Naive thymus-derived CD4-positive, alpha-beta T cell (primary cell): ENCODE measurements at regions of chr12 and their contacts with region 1.

Region 1: DNA sequence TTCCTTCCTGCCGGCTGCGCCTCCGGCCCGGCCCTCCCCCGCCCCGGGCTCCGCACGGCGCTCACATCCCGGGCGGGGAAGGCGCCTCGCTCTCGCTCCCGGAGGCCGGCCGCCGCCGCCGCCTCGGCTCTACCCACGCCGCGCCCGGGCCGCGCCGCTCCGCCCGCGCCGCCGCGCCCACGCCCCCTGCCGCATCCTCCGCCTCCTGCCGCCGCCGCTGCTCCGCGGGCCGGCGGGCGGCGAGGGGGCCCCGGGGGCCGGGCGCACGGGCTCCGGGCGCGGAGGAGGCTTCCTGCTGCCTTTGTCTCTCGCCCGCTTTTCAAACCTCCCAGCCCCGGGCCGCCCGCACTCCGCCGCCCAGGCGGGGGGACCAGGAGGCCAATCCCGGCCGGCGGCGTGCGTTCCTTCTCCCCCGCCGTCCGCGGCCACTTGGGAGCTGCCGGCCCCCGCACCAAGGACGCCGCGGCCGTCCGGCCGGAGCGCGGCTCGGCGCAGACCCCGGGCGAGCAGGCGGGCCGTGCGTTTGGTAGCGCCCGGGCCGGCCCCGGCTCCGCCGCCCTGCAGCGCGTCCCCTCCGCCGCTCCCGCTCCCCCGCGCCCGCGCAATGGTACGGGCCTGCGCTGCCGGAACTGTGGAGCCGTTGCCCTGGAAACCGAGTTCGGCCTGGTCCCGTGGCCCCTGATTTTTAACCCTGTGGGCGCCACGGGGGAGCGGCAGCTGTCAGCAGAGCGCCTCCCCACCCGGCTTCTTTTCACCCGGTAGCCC is at the start of gene FBXL14:
- DNase-seq: peak; percentile 87 to 93 (median 92)
- ATAC-seq: peak; percentile 85
- H3K4me3 ChIP-seq: peak within 1 kb of the TSS; percentile 91
- H3K4me3 Mint-ChIP-seq: peak within 1 kb of the TSS; percentile 89 to 98 (median 95)
- H3K27ac ChIP-seq: peak within 1 kb of the TSS; percentile 80
- H3K27ac Mint-ChIP-seq: peak within 1 kb of the TSS; percentile 94 to 97 (median 94)
- H3K4me1 ChIP-seq: peaks cover 19 to 23% of the 10 kb centered on the region in 2 donors
- H3K4me1 Mint-ChIP-seq: peaks cover 40 to 53% (median 44%) of the 10 kb centered on the region in 7 donors
- H3K27me3 ChIP-seq: no peaks in the 10 kb centered on the region
- H3K27me3 Mint-ChIP-seq: peaks cover 0 to 9% (median 0%) of the 10 kb centered on the region in 5 donors
- total RNA-seq, gene FBXL14: 25.6 to 43.8 (median 28.1) TPM

Region 2: DNA sequence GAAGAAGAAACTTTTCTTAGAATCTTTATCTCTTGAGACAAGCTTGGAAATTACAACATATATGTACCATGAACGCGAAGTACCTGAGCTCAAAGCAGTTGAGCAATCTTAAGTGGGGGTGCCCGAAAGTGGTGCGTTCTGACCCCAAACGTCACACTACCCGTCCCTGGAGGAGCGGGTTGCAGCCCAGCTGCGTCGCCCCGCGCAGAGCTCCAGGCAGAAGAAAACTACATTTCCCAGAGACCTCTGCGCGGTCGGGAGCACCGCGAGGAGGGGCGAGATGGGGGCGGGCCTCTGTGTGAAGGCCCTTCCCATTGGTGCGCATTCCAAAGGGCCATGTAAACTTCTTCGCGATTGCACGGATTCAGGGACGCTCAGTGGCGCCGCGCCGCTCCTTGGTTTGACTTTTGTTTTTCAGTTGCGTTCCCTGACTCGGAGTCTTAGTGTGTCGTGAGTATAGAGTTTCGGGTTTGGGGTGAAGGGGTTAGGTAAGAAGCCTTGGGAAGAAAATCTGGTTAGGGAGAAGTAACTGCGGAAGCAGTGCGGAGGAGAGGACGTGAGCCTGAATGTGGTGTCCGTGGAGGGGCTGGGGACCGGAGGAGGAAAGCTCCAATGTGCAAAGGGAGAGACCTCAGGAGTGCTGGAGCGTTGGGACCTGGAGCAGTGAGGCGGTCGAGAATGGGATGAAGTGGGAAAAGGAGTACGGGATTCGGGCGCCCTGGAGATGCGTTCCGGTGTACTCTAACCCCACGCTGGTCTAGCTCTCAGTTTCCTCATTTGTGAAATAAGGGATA is 1193.0 kb before region 1 on chr12 and contains the start of gene CCDC77:
- CTCF ChIA-PET with region 1: no interaction called
- POLR2A ChIA-PET with region 1: no interaction called
- intact Hi-C with region 1: loop called in 1 of 2 experiments (anchors 5 kb)
- DNase-seq: peak; percentile 91 to 97 (median 95)
- ATAC-seq: peak; percentile 100
- H3K4me3 ChIP-seq: peak within 1 kb of the TSS; percentile 94
- H3K4me3 Mint-ChIP-seq: no peak within 1 kb of the TSS
- H3K27ac ChIP-seq: peak within 1 kb of the TSS; percentile 71
- H3K27ac Mint-ChIP-seq: peak within 1 kb of the TSS in 1 of 9 donors; percentile 62
- H3K4me1 ChIP-seq: peaks cover 4 to 13% of the 10 kb centered on the region in 2 donors
- H3K4me1 Mint-ChIP-seq: peaks cover 0 to 9% (median 5%) of the 10 kb centered on the region in 7 donors
- H3K27me3 ChIP-seq: no peaks in the 10 kb centered on the region
- H3K27me3 Mint-ChIP-seq: no peaks in the 10 kb centered on the region
- total RNA-seq, gene CCDC77: 9.7 to 15.6 (median 12.7) TPM

Region 3: DNA sequence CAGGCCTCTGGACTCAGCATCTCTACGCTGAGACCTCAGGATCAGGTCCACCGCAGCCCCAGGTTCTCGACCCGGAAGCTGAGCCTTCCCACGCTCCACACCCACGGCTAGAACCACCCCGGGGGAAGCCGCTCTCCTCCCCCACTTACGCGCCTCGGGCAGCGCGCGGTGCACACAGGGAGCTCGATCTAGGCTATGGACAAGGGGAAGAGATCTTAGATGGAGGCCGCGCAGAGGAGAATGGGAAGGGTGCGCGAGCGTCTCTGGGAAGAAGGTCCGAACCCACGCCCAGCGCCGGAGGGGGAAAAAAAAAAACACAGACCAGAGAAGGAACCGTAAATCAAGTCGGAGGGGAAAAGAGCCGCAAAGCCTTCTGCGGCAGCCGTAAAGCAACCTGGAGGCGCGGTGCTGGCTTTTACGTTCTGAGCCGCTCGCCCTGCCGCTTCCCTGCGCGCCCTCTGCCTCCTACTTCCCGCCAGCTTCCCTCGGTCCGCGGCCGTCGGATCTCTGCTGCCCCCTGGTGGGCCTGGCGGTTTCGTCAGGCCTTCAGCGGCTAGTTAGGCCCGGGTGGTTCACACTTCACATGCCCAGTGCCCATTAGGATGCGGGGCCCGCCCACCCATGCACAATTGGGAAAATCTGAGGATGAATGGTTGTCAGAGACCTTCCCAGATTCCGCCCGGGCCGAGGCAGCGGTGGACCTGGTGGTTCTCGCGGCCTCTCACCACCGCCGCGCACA is 644.8 kb before region 1 on chr12 and contains the start of gene RAD52:
- CTCF ChIA-PET with region 1: no interaction called
- POLR2A ChIA-PET with region 1: no interaction called
- intact Hi-C with region 1: loop called (anchors 1 kb)
- DNase-seq: peak; percentile 94 to 99 (median 97)
- ATAC-seq: peak; percentile 96
- H3K4me3 ChIP-seq: peak within 1 kb of the TSS; percentile 83
- H3K4me3 Mint-ChIP-seq: peak within 1 kb of the TSS; percentile 90 to 98 (median 94)
- H3K27ac ChIP-seq: peak within 1 kb of the TSS; percentile 78
- H3K27ac Mint-ChIP-seq: peak within 1 kb of the TSS; percentile 88 to 98 (median 93)
- H3K4me1 ChIP-seq: peaks cover 0 to 3% of the 10 kb centered on the region in 2 donors
- H3K4me1 Mint-ChIP-seq: peaks cover 20 to 34% (median 30%) of the 10 kb centered on the region in 7 donors
- H3K27me3 ChIP-seq: no peaks in the 10 kb centered on the region
- H3K27me3 Mint-ChIP-seq: peaks cover 0 to 4% (median 0%) of the 10 kb centered on the region in 5 donors
- total RNA-seq, gene RAD52: 11.0 to 34.9 (median 18.3) TPM

Region 4: DNA sequence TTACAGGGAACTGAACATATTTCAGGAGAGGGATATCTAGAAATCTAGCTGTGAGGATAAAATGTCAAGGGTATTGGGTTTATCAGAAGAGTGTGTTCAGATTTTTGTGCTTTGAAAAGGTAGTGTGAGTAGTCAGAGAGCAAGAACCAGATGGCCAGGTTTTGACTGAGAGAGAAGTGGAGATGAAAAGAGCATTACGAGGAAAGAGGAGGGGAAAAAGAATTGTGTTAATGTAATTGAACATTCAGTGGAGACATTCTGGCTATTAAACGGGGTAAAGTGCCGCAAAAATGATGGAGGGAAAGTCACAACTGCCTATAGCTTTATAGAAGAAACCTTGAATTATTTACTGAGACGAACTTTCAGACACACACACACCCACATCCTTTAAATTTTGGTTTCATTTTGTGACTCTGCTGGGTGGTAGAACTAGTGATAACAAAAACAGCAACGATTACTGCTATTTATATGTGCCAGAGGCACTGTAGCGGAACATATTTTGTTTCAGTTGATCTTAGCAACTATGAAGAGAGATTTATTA is 389.8 kb before region 1 on chr12:
- CTCF ChIA-PET with region 1: no interaction called
- POLR2A ChIA-PET with region 1: interaction called, 3 read pairs
- intact Hi-C with region 1: loop called in 1 of 2 experiments (anchors 5 kb)
- DNase-seq: peak in 7 of 9 donors; percentile 14 to 69 (median 57)
- ATAC-seq: peak; percentile 86
- H3K4me3 ChIP-seq: peak overlapping the region; percentile 66
- H3K4me3 Mint-ChIP-seq: no peak overlapping the region
- H3K27ac ChIP-seq: peak overlapping the region; percentile 69
- H3K27ac Mint-ChIP-seq: no peak overlapping the region
- H3K4me1 ChIP-seq: peaks cover 4 to 15% of the 10 kb centered on the region in 2 donors
- H3K4me1 Mint-ChIP-seq: peaks cover 10 to 17% (median 10%) of the 10 kb centered on the region in 7 donors
- H3K27me3 ChIP-seq: no peaks in the 10 kb centered on the region
- H3K27me3 Mint-ChIP-seq: no peaks in the 10 kb centered on the region

Region 5: DNA sequence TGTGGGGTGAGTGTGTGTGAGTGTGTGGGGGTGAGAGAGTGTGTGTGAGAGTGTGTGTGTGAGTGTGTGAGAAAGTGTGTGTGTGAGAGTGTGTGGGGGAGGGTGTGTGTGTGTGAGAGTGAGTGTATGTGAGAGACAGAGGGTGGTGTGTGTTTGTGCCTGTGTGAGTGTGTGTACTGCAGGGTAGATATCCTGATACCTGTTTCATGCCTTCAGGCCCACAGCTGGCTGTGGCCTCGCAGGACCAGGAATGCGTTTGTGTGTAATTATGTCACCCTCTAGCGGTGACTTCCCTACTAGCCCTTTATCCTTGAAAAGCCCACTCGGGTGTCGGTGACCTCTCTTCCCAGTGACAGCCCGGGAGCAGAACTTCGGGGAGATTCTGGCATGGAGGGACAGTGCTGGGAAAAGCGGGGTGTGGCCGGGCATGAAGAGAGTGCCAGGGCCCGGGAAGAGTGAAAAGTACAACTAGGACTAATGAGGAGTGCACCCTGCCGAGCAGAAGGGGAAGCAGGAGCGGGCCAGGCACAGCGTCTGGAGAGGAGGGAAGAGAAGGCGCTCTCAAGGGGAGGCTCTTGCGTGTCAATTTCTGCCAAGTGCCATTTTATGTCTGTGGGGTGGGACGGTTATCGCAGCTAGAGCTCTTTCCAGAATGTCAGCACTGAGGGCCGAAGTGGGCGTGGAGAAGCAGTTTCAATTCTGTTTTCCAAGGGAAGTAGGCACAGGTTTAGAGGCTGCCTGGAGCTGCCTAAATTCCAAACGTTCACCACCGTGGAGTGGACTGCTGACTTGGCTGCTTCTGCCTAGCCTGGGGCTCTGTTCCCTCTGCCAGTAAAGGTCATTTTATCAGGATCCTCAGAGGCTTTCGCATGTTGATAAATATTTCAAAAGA is 10.9 kb after region 1 on chr12:
- CTCF ChIA-PET with region 1: interaction called, 14 read pairs
- POLR2A ChIA-PET with region 1: interaction called, 82 read pairs
- intact Hi-C with region 1: loop called (anchors 1 kb)
- DNase-seq: peak; percentile 32 to 76 (median 68)
- ATAC-seq: peak; percentile 83
- H3K4me3 ChIP-seq: peak overlapping the region; percentile 55
- H3K4me3 Mint-ChIP-seq: peak overlapping the region; percentile 80 to 94 (median 86)
- H3K27ac ChIP-seq: no peak overlapping the region
- H3K27ac Mint-ChIP-seq: peak overlapping the region in 8 of 9 donors; percentile 27 to 87 (median 56)
- H3K4me1 ChIP-seq: peaks cover 13 to 15% of the 10 kb centered on the region in 2 donors
- H3K4me1 Mint-ChIP-seq: peaks cover 20 to 44% (median 38%) of the 10 kb centered on the region in 7 donors
- H3K27me3 ChIP-seq: no peaks in the 10 kb centered on the region
- H3K27me3 Mint-ChIP-seq: peaks cover 0 to 8% (median 0%) of the 10 kb centered on the region in 5 donors

Region 6: DNA sequence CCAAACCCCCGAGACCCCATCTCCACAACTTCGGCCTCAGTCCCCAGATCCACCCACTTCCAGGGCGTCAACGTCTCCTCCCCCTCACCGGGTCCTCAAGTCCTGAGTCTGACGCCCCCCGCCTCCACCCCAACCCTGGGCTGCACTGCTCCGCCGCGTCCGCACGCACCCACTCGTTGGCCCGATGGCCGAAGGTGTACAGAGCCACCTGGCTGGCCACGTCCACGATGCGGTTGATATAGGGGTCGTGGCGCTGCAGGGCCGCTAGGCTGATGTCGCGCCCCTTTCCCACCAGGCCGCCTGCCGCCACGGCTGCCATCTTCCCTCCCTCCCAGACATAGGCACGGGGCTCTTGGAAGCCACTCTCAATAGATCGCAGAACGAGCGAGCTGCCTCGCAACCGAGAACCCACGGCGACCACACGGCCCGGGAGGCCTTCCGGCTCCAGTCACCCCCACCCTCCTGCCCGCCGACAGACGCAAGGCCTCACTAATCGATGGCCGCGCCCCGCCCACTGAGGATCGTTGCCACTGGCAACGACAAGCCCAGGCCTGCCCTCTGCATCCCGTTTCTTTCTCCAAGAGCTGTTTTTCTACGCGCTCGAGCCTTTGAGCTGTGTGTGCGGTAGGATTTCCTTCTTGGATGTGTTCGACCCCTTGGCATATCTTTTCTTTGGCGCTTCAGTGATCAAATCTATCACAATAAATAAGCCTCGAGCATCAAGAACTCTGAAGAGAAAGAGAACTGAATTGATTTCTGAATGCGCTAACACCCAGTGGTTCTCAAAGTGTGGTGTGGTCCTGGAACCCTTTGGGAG is 409.9 kb after region 1 on chr12 and contains the start of gene DCP1B:
- CTCF ChIA-PET with region 1: no interaction called
- POLR2A ChIA-PET with region 1: no interaction called
- intact Hi-C with region 1: loop called (anchors 1 to 2 kb)
- DNase-seq: peak; percentile 76 to 93 (median 90)
- ATAC-seq: peak; percentile 99
- H3K4me3 ChIP-seq: peak within 1 kb of the TSS; percentile 80
- H3K4me3 Mint-ChIP-seq: peak within 1 kb of the TSS; percentile 92 to 100 (median 97)
- H3K27ac ChIP-seq: peak within 1 kb of the TSS; percentile 80
- H3K27ac Mint-ChIP-seq: peak within 1 kb of the TSS; percentile 93 to 99 (median 97)
- H3K4me1 ChIP-seq: peaks cover 10 to 18% of the 10 kb centered on the region in 2 donors
- H3K4me1 Mint-ChIP-seq: peaks cover 15 to 44% (median 36%) of the 10 kb centered on the region in 7 donors
- H3K27me3 ChIP-seq: no peaks in the 10 kb centered on the region
- H3K27me3 Mint-ChIP-seq: peaks cover 0 to 6% (median 0%) of the 10 kb centered on the region in 5 donors
- total RNA-seq, gene DCP1B: 8.1 to 19.7 (median 15.5) TPM